ENCODE measurements at regions of chr12 and their contacts with region 1.

Region 1: GRCh38 chr12:94875525-94875924 is 128.0 kb downstream of the NDUFA12 start:
- DNase-seq: peak; percentile 21
- ATAC-seq: peak; percentile 27
- H3K4me3 Mint-ChIP-seq: peak overlapping the region; percentile 15
- H3K27ac Mint-ChIP-seq: no peak overlapping the region
- H3K4me1 Mint-ChIP-seq: peaks cover 31% of the 10 kb centered on the region
- H3K27me3 Mint-ChIP-seq: peaks cover 55% of the 10 kb centered on the region
- CTCF ChIP-seq: no peak

Region 2: GRCh38 chr12:94710933-94711332 is 164.6 kb before region 1 on chr12:
- CTCF ChIA-PET with region 1: interaction called, 27 read pairs
- POLR2A ChIA-PET with region 1: no interaction called
- DNase-seq: peak; percentile 49
- ATAC-seq: peak; percentile 84
- H3K4me3 Mint-ChIP-seq: no peak overlapping the region
- H3K27ac Mint-ChIP-seq: no peak overlapping the region
- H3K4me1 Mint-ChIP-seq: peaks cover 2% of the 10 kb centered on the region; the same call in 1 of the 2 replicates
- H3K27me3 Mint-ChIP-seq: no peaks in the 10 kb centered on the region
- CTCF ChIP-seq: no peak

Region 3: DNA sequence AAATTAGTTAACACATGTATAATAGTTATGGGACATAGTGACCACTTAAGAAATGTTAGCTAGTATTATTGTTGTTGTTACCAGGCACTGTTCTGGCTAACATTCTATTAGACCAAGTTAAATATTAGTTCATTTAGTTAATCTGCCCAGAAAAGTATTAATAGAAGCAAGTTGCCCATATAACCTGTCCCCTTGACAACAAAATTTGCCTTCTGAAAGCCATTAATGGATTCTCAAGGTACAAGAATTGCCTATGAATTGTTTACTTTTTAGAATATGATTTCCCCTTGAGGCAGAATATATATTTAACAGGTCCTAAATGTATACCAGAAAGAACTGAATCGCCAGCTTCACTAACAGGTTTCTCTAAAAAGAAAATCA is 57.8 kb before region 1 on chr12:
- CTCF ChIA-PET with region 1: interaction called, 17 read pairs
- POLR2A ChIA-PET with region 1: no interaction called
- DNase-seq: no peak
- ATAC-seq: no peak
- H3K4me3 Mint-ChIP-seq: no peak overlapping the region
- H3K27ac Mint-ChIP-seq: no peak overlapping the region
- H3K4me1 Mint-ChIP-seq: peaks cover 29% of the 10 kb centered on the region
- H3K27me3 Mint-ChIP-seq: peaks cover 22% of the 10 kb centered on the region
- CTCF ChIP-seq: no peak

Region 4: DNA sequence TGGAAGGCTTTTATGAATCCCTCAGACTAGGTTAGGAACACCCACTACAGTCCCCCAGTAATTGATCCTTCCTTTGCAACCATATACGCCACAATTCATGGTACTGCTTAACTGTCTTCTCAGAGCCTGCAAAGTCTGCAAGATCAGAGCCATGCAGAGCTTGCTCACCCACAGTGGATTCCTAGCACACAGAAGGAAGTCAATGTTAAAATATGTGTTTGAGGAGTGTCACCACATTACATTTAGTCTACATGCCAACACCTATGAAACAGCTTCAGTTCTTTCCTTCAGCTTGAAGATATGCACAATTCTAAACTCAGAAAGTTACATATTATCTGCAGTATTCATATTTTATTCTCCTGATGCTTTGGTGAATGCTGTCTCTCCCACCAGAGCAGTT is 10.5 kb before region 1 on chr12:
- CTCF ChIA-PET with region 1: interaction called, 9 read pairs
- POLR2A ChIA-PET with region 1: interaction called, 11 read pairs
- DNase-seq: no peak
- ATAC-seq: no peak
- H3K4me3 Mint-ChIP-seq: no peak overlapping the region
- H3K27ac Mint-ChIP-seq: no peak overlapping the region
- H3K4me1 Mint-ChIP-seq: no peaks in the 10 kb centered on the region
- H3K27me3 Mint-ChIP-seq: no peaks in the 10 kb centered on the region
- CTCF ChIP-seq: no peak

Measured in WTC11 (cell line).